IMR-90 (cell line): ENCODE measurements at regions of chr1 and their contacts with region 1.

Region 1: DNA sequence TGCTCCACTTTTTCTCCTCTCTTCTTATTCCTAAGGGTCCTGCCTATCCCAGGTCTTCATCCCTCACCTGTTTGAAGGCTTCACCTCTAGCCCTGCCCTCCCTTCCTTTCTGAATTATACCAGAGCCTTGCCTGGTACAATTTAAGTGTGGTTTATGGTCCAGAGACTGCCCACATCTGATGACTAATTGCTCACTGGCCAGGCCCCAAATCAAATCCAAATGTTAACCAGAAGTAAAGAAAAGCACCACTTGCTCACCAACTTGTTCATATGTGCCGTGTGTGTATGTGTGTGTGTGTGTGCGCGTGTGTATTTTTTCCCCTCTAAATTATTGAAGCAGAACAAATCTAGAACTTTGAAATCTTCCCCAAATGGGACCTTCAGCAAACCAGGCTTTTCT is 26.4 kb downstream of the MYOM3 start:
- DNase-seq: peak; percentile 18
- ATAC-seq: no peak
- H3K4me3 ChIP-seq: no peak overlapping the region
- H3K27ac ChIP-seq: no peak overlapping the region
- H3K4me1 ChIP-seq: no peaks in the 10 kb centered on the region
- H3K27me3 ChIP-seq: peaks cover 62% of the 10 kb centered on the region
- CTCF ChIP-seq: no peak
- POLR2A ChIP-seq: no peak
- RAD21 ChIP-seq: no peak

Region 2: GRCh38 chr1:24036088-24036487 is 49.5 kb before region 1 on chr1:
- CTCF ChIA-PET with region 1: no interaction called
- POLR2A ChIA-PET with region 1: no interaction called
- dilution Hi-C with region 1: no loop called
- in situ Hi-C with region 1: no loop called
- intact Hi-C with region 1: no loop called
- DNase-seq: no peak
- ATAC-seq: no peak
- H3K4me3 ChIP-seq: no peak overlapping the region
- H3K27ac ChIP-seq: no peak overlapping the region
- H3K4me1 ChIP-seq: no peaks in the 10 kb centered on the region
- H3K27me3 ChIP-seq: peaks cover 2% of the 10 kb centered on the region; the same call in 1 of the 2 replicates
- CTCF ChIP-seq: no peak
- POLR2A ChIP-seq: no peak
- RAD21 ChIP-seq: no peak

Region 3: DNA sequence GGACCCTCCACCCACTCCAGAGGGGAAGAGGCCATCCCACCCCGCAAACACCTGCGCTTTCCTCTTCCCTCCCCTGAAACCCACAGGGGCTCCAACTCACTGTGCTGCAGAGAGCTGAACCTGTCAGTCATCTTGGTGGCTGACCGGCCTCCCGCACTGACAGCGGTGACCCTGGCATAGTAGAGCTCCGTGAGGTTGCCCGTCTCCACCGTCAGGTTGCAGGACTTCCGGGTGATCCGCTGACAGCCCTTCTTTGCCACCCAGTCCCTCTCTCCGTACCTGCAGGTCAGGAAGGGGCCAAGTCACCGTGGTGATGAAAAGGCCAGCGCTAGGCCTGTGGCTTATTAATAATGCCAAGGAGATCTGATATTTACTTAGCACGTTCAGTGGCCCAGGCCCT is 51.5 kb after region 1 on chr1:
- CTCF ChIA-PET with region 1: no interaction called
- POLR2A ChIA-PET with region 1: no interaction called
- dilution Hi-C with region 1: no loop called
- in situ Hi-C with region 1: no loop called
- intact Hi-C with region 1: loop called (anchors 10 kb)
- DNase-seq: no peak
- ATAC-seq: no peak
- H3K4me3 ChIP-seq: no peak overlapping the region
- H3K27ac ChIP-seq: no peak overlapping the region
- H3K4me1 ChIP-seq: no peaks in the 10 kb centered on the region
- H3K27me3 ChIP-seq: peaks cover 40% of the 10 kb centered on the region
- CTCF ChIP-seq: no peak
- POLR2A ChIP-seq: no peak
- RAD21 ChIP-seq: no peak

Region 4: GRCh38 chr1:24714859-24715520 is 629.4 kb after region 1 on chr1:
- CTCF ChIA-PET with region 1: no interaction called
- POLR2A ChIA-PET with region 1: no interaction called
- dilution Hi-C with region 1: no loop called
- in situ Hi-C with region 1: no loop called
- intact Hi-C with region 1: no loop called
- DNase-seq: peak; percentile 47
- ATAC-seq: no peak
- H3K4me3 ChIP-seq: no peak overlapping the region
- H3K27ac ChIP-seq: no peak overlapping the region; the same call in 1 of the 2 replicates
- H3K4me1 ChIP-seq: peaks cover 23% of the 10 kb centered on the region
- H3K27me3 ChIP-seq: no peaks in the 10 kb centered on the region
- CTCF ChIP-seq: no peak
- POLR2A ChIP-seq: no peak
- RAD21 ChIP-seq: no peak